ENCODE measurements at regions of chr11 and their contacts with region 1.

Region 1: GRCh38 chr11:32953700-32954099 is 61.1 kb downstream of the QSER1 start:
- DNase-seq: no peak
- H3K4me3 ChIP-seq: no peak overlapping the region
- H3K27ac ChIP-seq: no peak overlapping the region
- H3K4me1 ChIP-seq: no peaks in the 10 kb centered on the region
- H3K27me3 ChIP-seq: no peaks in the 10 kb centered on the region
- CTCF ChIP-seq: no peak
- EP300 ChIP-seq: no peak
- POLR2A ChIP-seq: no peak

Region 2: DNA sequence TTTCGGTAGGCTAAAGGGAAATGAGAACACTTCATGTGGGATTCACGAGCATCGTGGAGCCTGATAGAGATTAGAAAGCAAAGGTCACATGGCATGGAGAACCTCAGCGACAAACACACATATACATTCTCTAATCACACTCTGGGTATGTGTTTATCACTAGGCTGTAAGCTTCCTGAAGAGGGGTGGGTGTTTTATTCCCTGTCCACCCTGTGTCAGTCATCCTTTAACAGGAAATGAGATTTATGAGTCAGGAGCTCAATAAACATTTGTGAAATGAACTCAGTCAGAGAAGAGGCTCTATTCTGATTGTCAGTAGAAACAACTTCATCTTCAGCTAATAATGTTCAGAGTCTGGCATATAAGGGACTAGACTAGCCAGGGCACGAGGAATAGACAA is 441.8 kb before region 1 on chr11:
- in situ Hi-C with region 1: no loop called
- intact Hi-C with region 1: no loop called
- DNase-seq: no peak
- H3K4me3 ChIP-seq: no peak overlapping the region
- H3K27ac ChIP-seq: no peak overlapping the region
- H3K4me1 ChIP-seq: no peaks in the 10 kb centered on the region
- H3K27me3 ChIP-seq: peaks cover 11% of the 10 kb centered on the region
- CTCF ChIP-seq: no peak
- EP300 ChIP-seq: no peak
- POLR2A ChIP-seq: no peak

Region 3: DNA sequence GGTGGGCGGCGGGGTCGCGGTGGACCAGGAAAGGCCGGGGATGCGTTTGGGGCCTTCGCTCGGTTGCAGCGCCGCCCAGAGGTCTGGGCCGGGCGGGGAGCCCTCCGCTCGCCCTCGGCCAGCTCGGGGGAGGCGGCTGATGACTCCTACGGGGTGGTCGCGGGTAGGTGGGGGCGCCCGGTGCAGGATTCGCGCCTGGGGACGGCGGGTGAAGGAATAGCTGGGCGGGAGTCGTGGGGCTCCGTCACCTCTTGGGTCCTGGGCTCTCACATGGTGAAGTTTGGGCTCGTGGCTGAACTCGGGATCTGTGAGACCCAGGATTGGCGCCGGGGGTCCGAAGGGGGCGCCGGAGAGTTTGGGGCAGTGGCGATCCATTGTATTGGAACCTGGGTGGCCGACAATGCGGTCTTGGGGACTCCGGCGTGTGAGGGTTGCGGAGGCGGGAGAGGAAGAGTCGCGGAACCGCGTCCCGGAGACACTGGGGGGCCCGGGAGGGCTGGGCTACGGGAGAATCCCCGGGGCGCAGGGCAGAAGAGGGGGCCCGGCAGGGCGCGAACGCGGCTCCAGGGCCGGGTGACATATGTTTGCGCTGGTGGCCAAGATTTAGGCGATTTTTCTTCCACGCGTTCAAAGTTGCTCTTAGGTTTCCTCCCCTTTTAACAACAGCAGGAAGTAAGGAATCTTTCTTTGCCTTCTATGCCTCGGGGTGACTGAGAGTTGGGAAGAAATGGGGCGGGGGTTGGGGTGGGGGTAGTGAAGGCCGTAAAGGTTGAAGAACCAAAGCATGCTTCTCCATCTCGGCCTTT is 60.2 kb before region 1 on chr11:
- in situ Hi-C with region 1: loop called in 1 of 4 experiments (anchors 10 kb)
- intact Hi-C with region 1: no loop called
- DNase-seq: peak; percentile 55
- H3K4me3 ChIP-seq: peak overlapping the region; percentile 91 to 92 (median 92)
- H3K27ac ChIP-seq: peak overlapping the region; percentile 94 to 98 (median 96)
- H3K4me1 ChIP-seq: peaks cover 0 to 25% (median 10%) of the 10 kb centered on the region in 4 donors
- H3K27me3 ChIP-seq: no peaks in the 10 kb centered on the region
- CTCF ChIP-seq: peak; percentile 39 to 50 (median 48)
- EP300 ChIP-seq: no peak
- POLR2A ChIP-seq: no peak

Region 4: DNA sequence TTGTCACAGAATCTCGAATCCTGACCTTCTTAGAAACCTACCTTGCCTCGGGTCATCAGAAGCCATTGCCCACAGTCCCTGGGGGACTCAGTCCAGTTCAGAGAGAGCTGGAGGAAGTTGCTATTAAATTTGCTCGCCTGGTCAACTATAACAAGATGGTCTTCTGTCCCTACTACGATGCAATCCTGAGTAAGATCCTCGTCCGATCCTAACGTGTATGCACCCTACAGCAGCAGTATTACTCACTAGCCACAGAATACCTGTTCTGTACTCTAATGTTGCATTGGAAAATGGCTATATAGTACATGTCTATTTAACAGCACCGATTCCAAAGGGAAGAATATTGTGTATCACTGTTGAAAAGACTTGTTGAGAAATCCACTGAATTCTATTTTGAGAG is 118.8 kb after region 1 on chr11:
- in situ Hi-C with region 1: loop called in 1 of 4 experiments (anchors 10 kb)
- intact Hi-C with region 1: no loop called
- DNase-seq: no peak
- H3K4me3 ChIP-seq: no peak overlapping the region
- H3K27ac ChIP-seq: no peak overlapping the region
- H3K4me1 ChIP-seq: no peaks in the 10 kb centered on the region
- H3K27me3 ChIP-seq: no peaks in the 10 kb centered on the region
- CTCF ChIP-seq: no peak
- EP300 ChIP-seq: no peak
- POLR2A ChIP-seq: no peak

Region 5: DNA sequence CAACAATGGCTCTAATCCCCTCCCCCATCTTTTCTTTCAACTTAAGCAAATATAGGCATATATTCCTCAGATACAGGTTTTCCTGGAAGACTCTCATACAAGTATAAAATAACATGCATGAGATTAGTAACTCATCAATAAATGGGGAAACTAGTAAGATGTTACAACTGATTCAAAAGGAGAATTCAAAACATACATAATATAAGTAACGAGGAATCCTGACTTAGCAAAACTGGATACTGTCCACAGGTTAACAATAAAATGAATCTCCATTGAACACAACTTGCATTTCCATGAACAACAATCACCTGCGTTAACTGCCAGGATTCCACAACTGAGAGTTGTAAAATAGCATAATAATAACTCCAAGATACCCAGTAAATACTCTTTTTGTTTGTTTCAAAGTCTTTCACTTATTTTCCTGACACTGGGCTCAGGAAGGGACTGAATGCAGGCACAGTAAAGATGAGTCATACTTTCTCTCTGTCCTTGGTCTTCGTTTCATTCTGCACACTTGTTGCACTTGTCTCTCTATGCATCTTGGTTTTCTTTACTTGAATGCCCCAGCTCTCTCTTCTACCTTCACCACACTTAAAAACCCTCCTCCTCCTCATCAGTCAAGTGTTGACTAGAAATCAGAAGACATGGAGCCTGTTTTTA is 1954.4 kb after region 1 on chr11:
- in situ Hi-C with region 1: no loop called
- intact Hi-C with region 1: no loop called
- DNase-seq: no peak
- H3K4me3 ChIP-seq: no peak overlapping the region
- H3K27ac ChIP-seq: no peak overlapping the region
- H3K4me1 ChIP-seq: peaks cover 0 to 5% (median 0%) of the 10 kb centered on the region in 4 donors
- H3K27me3 ChIP-seq: no peaks in the 10 kb centered on the region
- CTCF ChIP-seq: no peak
- EP300 ChIP-seq: no peak
- POLR2A ChIP-seq: no peak